Naive thymus-derived CD8-positive, alpha-beta T cell (primary cell): ENCODE measurements at regions of chr22 and their contacts with region 1.

Region 1: DNA sequence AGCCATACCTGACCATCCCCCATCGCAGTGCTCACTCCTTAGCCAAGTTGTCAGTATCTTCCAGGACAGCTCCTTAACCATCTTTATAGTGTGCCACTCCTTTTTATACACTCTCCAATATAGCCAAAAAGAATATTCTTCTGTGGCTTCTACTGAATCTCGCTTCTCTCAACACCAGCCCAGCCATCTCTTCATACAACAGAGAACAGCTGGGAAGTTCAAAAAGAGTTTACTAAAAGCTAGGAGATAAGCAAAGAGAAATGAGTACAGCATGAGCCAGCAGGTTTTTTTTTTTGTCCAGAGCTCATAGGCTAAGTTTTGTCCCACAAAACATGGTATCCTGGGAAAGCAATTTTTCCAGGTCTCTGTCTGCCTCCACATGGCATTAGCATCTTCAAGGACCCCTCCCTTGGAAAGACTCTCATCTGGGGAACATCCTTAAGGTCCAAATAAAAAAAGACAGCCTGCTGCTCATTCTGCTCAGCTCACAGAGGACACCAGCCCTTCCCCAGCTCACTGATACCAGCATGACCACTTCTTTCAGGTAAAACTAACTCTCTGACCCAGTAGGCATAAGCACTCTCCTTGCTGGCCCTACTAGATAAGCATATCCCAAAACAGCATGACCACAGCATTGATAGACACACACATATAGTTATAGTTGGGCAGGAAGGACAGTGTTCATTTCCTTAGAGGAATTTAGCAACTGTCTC is 48.8 kb upstream of the YWHAH start:
- DNase-seq: no peak
- ATAC-seq: no peak
- H3K4me3 Mint-ChIP-seq: no peak overlapping the region
- H3K27ac Mint-ChIP-seq: peak overlapping the region in 1 of 10 donors; percentile 50
- H3K4me1 Mint-ChIP-seq: no peaks in the 10 kb centered on the region
- H3K27me3 Mint-ChIP-seq: no peaks in the 10 kb centered on the region

Region 2: GRCh38 chr22:31692186-31692886 is 203.2 kb before region 1 on chr22:
- POLR2A ChIA-PET with region 1: interaction called, 12 read pairs
- DNase-seq: peak in 1 of 10 donors; percentile 10
- ATAC-seq: peak; percentile 46 to 49
- H3K4me3 Mint-ChIP-seq: no peak overlapping the region
- H3K27ac Mint-ChIP-seq: peak overlapping the region in 6 of 10 donors; percentile 35 to 88 (median 70)
- H3K4me1 Mint-ChIP-seq: peaks cover 3 to 26% (median 13%) of the 10 kb centered on the region in 4 donors
- H3K27me3 Mint-ChIP-seq: no peaks in the 10 kb centered on the region

Region 3: DNA sequence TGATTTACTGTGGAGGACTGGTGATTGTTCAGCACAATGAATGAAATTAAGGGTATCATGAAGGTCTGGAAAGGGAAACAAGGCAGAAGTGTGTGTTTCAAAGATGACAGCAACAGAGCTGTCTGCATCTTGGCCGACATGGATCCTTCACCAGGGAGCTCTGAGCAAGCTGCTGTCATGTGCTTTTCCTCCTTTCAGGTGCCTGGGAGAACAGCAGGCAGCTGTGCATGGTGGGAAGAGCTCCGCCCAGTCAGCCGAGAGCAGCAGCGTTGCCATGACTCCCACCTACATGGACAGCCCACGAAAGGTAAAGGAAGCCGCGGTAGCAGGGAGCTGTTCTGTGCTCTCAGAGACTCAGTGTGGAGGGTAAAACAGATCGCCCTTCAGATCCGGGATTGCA is 38.3 kb before region 1 on chr22:
- POLR2A ChIA-PET with region 1: no interaction called
- DNase-seq: no peak
- ATAC-seq: no peak
- H3K4me3 Mint-ChIP-seq: no peak overlapping the region
- H3K27ac Mint-ChIP-seq: no peak overlapping the region
- H3K4me1 Mint-ChIP-seq: no peaks in the 10 kb centered on the region
- H3K27me3 Mint-ChIP-seq: no peaks in the 10 kb centered on the region

Region 4: GRCh38 chr22:31935966-31936635 is 40.5 kb after region 1 on chr22:
- POLR2A ChIA-PET with region 1: no interaction called
- DNase-seq: no peak
- ATAC-seq: no peak
- H3K4me3 Mint-ChIP-seq: no peak overlapping the region
- H3K27ac Mint-ChIP-seq: no peak overlapping the region
- H3K4me1 Mint-ChIP-seq: no peaks in the 10 kb centered on the region
- H3K27me3 Mint-ChIP-seq: no peaks in the 10 kb centered on the region